Sigmoid colon (tissue), 7 donors: ENCODE measurements at regions of chr6 and their contacts with region 1.

Region 1: DNA sequence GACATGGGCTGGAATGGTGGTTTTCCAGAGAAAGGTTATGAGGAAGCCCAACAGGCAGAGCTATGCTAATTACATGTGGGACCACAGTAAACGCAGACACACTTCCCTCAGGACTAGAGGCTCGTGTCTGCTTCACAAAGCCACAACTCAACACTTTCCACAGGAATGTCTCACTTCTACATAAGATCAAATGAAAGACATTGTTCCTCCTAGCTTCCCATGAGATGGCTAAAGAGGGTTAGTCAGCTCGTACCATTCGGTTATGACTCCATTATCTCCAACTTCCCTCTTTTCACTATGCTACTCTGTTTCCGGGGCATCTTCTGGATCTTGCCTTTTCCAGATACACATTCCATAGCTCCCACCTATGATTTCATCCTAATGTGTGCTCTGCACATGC is 29.1 kb upstream of the ZC3H12D start:
- DNase-seq: no peak
- H3K4me3 ChIP-seq: no peak overlapping the region
- H3K27ac ChIP-seq: no peak overlapping the region
- H3K4me1 ChIP-seq: peaks cover 0 to 3% (median 0%) of the 10 kb centered on the region in 4 donors
- H3K27me3 ChIP-seq: no peaks in the 10 kb centered on the region
- CTCF ChIP-seq: no peak
- EP300 ChIP-seq: no peak
- POLR2A ChIP-seq: no peak

Region 2: DNA sequence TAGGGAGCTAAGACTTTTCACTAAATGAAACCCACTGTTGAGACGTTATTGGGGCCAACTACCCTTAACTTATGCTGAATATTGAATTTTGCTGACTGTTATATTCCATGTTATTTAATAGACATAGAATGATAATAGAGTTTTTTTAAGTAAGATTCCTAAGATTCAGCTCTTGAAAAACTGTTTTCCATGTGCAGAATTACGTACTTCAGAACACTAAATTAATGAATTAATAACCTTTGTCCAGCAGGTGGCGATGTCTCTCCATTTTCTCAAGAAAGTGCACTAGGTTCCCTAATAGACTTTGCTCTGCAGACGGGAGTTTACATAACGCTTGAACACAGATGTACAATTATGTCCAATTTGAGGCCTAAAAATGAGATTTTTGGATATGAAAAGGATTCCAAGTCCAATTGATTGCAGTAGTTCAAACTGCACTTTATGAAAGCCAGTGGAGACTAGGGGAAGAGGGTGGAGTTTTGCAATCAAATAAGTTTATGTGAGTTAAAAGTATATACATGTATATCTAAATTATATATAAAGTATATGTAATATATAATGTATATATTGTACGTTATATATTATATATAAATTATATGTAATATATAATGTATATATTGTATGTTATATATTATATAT is 485.0 kb before region 1 on chr6:
- intact Hi-C with region 1: loop called (anchors 2 kb)
- DNase-seq: peak; percentile 85
- H3K4me3 ChIP-seq: no peak overlapping the region
- H3K27ac ChIP-seq: peak overlapping the region in 1 of 4 donors; percentile 20
- H3K4me1 ChIP-seq: peaks cover 0 to 23% (median 20%) of the 10 kb centered on the region in 4 donors
- H3K27me3 ChIP-seq: no peaks in the 10 kb centered on the region
- CTCF ChIP-seq: peak; percentile 49 to 73 (median 66)
- EP300 ChIP-seq: no peak
- POLR2A ChIP-seq: no peak

Region 3: GRCh38 chr6:149082286-149082707 is 431.6 kb before region 1 on chr6:
- intact Hi-C with region 1: loop called (anchors 5 kb)
- DNase-seq: peak; percentile 88
- H3K4me3 ChIP-seq: no peak overlapping the region
- H3K27ac ChIP-seq: no peak overlapping the region
- H3K4me1 ChIP-seq: peaks cover 0 to 44% (median 31%) of the 10 kb centered on the region in 4 donors
- H3K27me3 ChIP-seq: no peaks in the 10 kb centered on the region
- CTCF ChIP-seq: peak; percentile 60 to 79 (median 76)
- EP300 ChIP-seq: no peak
- POLR2A ChIP-seq: no peak

Region 4: GRCh38 chr6:149454386-149454848 is 59.5 kb before region 1 on chr6:
- intact Hi-C with region 1: loop called (anchors 5 kb)
- DNase-seq: peak; percentile 98
- H3K4me3 ChIP-seq: peak overlapping the region in 1 of 4 donors; percentile 3
- H3K27ac ChIP-seq: peak overlapping the region; percentile 67 to 78 (median 70)
- H3K4me1 ChIP-seq: peaks cover 0 to 48% (median 39%) of the 10 kb centered on the region in 4 donors
- H3K27me3 ChIP-seq: no peaks in the 10 kb centered on the region
- CTCF ChIP-seq: no peak
- EP300 ChIP-seq: peak in 2 of 4 donors; percentile 54 to 58
- POLR2A ChIP-seq: no peak

Region 5: DNA sequence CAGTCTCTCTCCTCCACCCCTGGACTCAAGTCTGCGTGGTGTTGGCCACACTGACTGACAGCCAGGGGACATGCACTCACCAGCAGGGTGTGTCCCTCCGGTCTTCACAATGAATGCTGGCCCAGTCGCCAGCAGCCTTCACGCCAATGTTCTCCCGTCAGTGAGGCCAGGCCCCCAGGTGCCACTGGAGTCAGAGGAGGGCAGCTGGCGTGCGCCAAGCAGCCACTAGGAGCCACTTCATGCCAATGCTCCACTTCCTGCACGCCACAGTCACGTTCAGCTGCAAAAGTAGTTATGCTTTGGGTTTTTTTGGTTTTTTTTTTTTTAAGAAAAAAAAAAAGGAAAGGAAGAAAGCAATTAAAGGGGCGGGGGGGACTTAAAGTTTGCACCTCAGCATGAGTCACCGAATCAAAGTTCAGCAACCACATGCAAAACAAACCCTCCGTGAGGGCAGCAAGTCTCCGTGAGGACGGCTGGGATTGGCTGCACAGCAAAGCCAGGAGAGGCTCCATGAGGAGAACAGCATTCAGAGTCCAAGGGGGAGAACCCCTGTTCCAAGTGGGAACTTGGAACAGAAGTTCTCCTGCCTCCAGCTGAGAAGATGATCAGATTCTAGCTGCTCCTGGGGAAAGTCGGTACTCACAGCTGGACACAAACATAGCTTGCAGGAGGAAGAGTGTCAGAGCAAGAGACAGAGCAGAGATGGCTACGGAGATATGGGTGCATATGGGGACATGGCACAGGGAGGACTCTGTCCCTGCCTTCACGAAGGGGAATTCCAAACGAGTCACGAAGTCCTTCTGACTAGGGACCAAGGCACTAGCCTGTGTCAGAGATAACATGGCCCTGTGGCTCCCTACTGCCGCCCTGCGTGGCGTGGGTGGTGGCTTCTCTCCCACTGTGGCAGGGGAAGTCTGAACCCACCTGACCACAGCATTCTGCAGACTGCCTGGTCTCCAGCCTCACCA is 28.9 kb before region 1 on chr6 and contains the start of gene ZC3H12D:
- intact Hi-C with region 1: no loop called
- DNase-seq: peak; percentile 68
- H3K4me3 ChIP-seq: peak within 1 kb of the TSS in 1 of 4 donors; percentile 12
- H3K27ac ChIP-seq: peak within 1 kb of the TSS; percentile 31 to 69 (median 44)
- H3K4me1 ChIP-seq: peaks cover 0 to 15% (median 0%) of the 10 kb centered on the region in 4 donors
- H3K27me3 ChIP-seq: no peaks in the 10 kb centered on the region
- CTCF ChIP-seq: peak in 1 of 4 experiments; percentile 28
- EP300 ChIP-seq: no peak
- POLR2A ChIP-seq: no peak
- total RNA-seq, gene ZC3H12D: 0.71 to 4.9 (median 1.2) TPM